ENCODE measurements at regions of chr13 and their contacts with region 1.

Region 1: GRCh38 chr13:33571618-33572017 is 246.3 kb upstream of the RFC3 start:
- DNase-seq: no peak
- H3K4me3 Mint-ChIP-seq: no peak overlapping the region
- H3K27ac Mint-ChIP-seq: no peak overlapping the region
- H3K4me1 Mint-ChIP-seq: peaks cover 14% of the 10 kb centered on the region
- H3K27me3 Mint-ChIP-seq: no peaks in the 10 kb centered on the region

Region 2: DNA sequence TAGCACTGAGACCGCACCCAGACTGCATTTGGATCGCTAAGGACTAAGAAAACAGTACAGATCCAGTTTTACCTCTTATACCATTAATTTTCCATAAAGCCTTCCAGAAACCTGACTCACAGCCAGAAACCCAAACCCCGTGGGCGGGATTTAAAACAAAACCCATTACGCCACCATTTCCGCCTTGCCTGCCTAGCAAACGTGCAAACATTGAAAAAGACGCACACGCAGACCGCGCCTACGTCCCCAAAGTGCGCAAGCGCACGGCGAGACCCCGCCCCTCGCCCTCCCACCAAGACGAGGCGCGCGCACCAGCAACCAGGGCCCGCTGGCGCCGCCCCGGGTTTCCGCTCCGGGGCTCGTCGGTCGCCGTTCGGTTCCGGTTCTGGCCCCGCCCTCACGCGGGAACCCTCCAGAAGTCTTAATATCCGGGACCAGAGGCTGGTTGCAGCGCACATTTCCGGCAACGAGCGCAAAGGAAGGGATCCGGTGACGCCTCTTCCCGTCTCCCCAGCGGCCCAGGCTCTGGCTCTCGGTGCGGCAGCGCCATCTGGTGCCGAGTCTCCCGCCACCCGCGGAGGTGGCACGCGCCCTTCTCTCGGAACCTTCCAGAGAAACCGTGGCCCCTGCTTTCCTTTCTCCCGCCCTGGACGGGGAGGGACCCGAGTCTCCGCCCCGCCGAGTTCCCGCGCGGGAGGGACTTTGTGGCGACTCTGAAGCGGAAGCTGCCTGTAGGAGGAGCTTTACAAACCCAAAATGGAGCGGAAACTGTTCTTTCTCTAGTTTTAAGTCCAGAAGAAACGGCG is 29.1 kb before region 1 on chr13:
- intact Hi-C with region 1: no loop called
- DNase-seq: peak; percentile 98
- H3K4me3 Mint-ChIP-seq: peak overlapping the region; percentile 80
- H3K27ac Mint-ChIP-seq: peak overlapping the region; percentile 98
- H3K4me1 Mint-ChIP-seq: peaks cover 42% of the 10 kb centered on the region
- H3K27me3 Mint-ChIP-seq: no peaks in the 10 kb centered on the region

Region 3: DNA sequence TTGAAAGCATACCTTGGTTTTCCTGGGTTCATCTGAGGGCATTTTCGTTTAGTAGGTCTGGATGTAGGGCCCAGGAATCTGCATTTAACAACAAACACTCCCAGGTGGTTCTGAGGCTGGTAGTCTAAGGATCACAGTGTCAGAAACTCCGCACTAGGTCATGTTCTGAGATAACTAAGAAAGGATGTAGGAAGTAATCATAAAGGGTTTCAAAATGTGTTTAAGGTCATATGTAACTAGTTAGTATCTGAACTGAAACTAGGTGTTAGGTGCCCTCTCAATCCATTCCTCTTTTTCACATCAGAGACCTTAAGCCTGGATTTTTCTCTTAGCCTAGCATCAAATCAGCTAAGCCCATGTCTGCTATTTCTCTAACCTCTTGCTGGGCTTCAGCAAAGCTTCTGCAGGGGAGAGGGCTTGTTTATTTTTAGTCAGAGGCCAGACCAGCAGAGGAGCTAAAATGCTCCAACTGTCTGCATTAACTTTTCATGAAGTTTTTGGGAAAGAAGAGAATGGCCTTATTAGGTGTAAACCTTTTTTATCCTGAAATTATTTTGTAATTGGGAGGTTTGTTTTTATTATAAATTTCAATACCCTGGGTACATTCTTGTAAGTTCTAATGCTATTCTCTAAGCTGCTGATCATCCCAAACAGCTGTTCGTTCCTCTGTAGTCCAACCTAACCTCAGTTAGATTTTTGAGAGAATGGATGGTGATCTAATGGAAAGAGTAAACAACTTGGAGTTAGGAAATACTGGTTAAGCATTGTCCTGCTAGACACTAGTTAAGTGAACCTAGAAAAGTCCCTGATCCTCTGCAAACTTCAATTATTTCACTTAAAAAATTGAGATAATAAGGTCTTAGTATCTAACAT is 16.5 kb before region 1 on chr13:
- intact Hi-C with region 1: loop called (anchors 2 kb)
- DNase-seq: no peak
- H3K4me3 Mint-ChIP-seq: no peak overlapping the region
- H3K27ac Mint-ChIP-seq: no peak overlapping the region
- H3K4me1 Mint-ChIP-seq: peaks cover 33% of the 10 kb centered on the region
- H3K27me3 Mint-ChIP-seq: no peaks in the 10 kb centered on the region

Region 4: DNA sequence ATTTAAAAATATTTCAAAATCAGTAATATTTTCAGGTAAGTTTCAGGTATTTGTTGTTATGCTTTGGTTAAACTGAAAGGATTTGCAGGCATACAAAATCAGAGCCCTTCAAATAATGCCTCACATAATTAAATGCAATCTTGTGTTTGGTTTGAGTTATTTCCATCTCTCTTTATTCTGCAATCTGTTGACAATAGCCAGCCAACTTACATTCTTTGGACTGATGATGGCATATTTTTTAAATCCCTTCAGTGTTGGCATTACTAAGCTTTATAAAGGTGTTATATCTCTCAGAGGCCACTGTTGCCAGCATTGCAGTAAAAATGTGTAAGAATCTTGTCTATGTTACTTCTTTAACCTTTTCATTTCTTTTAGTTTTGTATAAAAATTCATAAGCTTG is 10.9 kb before region 1 on chr13:
- intact Hi-C with region 1: loop called (anchors 1 kb)
- DNase-seq: no peak
- H3K4me3 Mint-ChIP-seq: no peak overlapping the region
- H3K27ac Mint-ChIP-seq: no peak overlapping the region
- H3K4me1 Mint-ChIP-seq: peaks cover 10% of the 10 kb centered on the region
- H3K27me3 Mint-ChIP-seq: no peaks in the 10 kb centered on the region